Naive thymus-derived CD4-positive, alpha-beta T cell (primary cell): ENCODE measurements at regions of chr19 and their contacts with region 1.

Region 1: GRCh38 chr19:39341719-39342604 is at the start of gene SAMD4B:
- DNase-seq: peak; percentile 97 to 100 (median 99)
- ATAC-seq: peak; percentile 93
- H3K4me3 ChIP-seq: peak within 1 kb of the TSS; percentile 95
- H3K4me3 Mint-ChIP-seq: peak within 1 kb of the TSS; percentile 90 to 100 (median 97)
- H3K27ac ChIP-seq: peak within 1 kb of the TSS; percentile 84
- H3K27ac Mint-ChIP-seq: peak within 1 kb of the TSS; percentile 90 to 97 (median 96)
- H3K4me1 ChIP-seq: peaks cover 23 to 42% of the 10 kb centered on the region in 2 donors
- H3K4me1 Mint-ChIP-seq: peaks cover 64 to 77% (median 73%) of the 10 kb centered on the region in 7 donors
- H3K27me3 ChIP-seq: no peaks in the 10 kb centered on the region
- H3K27me3 Mint-ChIP-seq: no peaks in the 10 kb centered on the region
- total RNA-seq, gene SAMD4B: 52.0 to 84.6 (median 65.6) TPM

Region 2: DNA sequence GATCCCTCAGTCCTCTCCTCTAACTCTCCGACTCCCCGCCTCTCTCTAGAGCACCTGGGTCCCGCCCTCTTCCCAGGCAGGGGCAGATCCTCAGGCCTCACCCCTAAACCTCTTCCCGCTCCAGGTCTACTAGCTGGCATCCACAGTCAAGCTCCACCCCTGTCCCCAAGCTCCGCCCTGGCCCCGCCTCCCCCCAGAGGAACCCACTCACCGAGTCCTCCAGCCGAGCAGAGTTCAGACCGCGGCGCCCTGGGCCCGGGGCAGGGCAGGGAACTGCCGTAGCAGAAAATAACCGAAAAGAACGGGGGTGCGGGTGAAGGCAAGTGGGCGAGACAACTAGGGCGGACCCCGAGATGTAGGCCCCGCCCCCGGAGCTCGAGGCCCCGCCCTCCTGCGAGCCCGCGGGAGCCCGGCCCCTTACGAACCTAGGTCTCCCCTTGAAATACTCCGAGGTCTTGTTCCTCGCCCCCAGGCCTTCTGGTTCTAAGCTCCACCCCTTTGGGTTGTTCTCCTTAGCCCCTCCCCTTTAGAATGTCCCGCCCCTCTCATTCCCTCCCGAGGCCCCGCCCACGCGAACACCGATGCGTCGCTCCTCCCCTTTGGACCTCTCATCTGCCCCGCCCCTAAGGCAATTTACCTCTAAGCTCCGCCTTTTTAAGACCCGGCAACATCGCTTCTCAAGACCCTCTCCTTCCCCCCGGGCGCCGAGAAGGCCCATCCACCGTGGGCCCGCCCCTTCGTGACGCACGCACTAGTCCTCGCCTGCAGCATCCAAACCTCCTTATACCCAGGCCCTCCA is 954.2 kb before region 1 on chr19 and contains the start of gene GGN:
- CTCF ChIA-PET with region 1: no interaction called
- POLR2A ChIA-PET with region 1: no interaction called
- intact Hi-C with region 1: loop called in 1 of 2 experiments (anchors 10 kb)
- DNase-seq: peak; percentile 60 to 83 (median 72)
- ATAC-seq: peak; percentile 83
- H3K4me3 ChIP-seq: peak within 1 kb of the TSS; percentile 74
- H3K4me3 Mint-ChIP-seq: peak within 1 kb of the TSS; percentile 81 to 95 (median 91)
- H3K27ac ChIP-seq: no peak within 1 kb of the TSS
- H3K27ac Mint-ChIP-seq: peak within 1 kb of the TSS in 8 of 9 donors; percentile 43 to 95 (median 84)
- H3K4me1 ChIP-seq: peaks cover 13 to 34% of the 10 kb centered on the region in 2 donors
- H3K4me1 Mint-ChIP-seq: peaks cover 5 to 26% (median 21%) of the 10 kb centered on the region in 7 donors
- H3K27me3 ChIP-seq: no peaks in the 10 kb centered on the region
- H3K27me3 Mint-ChIP-seq: peaks cover 6 to 41% (median 30%) of the 10 kb centered on the region in 5 donors
- total RNA-seq, gene GGN: 0.29 to 0.60 (median 0.39) TPM in 3 of 5 experiments, not detected in the others

Region 3: GRCh38 chr19:39070888-39071287 is 271.1 kb before region 1 on chr19:
- CTCF ChIA-PET with region 1: no interaction called
- POLR2A ChIA-PET with region 1: interaction called, 3 read pairs
- intact Hi-C with region 1: loop called in 1 of 2 experiments (anchors 5 kb)
- DNase-seq: no peak
- ATAC-seq: no peak
- H3K4me3 ChIP-seq: no peak overlapping the region
- H3K4me3 Mint-ChIP-seq: no peak overlapping the region
- H3K27ac ChIP-seq: no peak overlapping the region
- H3K27ac Mint-ChIP-seq: peak overlapping the region in 3 of 9 donors; percentile 35 to 72 (median 67)
- H3K4me1 ChIP-seq: peaks cover 19 to 21% of the 10 kb centered on the region in 2 donors
- H3K4me1 Mint-ChIP-seq: peaks cover 7 to 30% (median 15%) of the 10 kb centered on the region in 7 donors
- H3K27me3 ChIP-seq: no peaks in the 10 kb centered on the region
- H3K27me3 Mint-ChIP-seq: no peaks in the 10 kb centered on the region

Region 4: GRCh38 chr19:39390755-39391592 is 49.0 kb after region 1 on chr19 and contains the starts of genes MED29 and PAF1:
- CTCF ChIA-PET with region 1: no interaction called
- POLR2A ChIA-PET with region 1: interaction called, 23 read pairs
- intact Hi-C with region 1: loop called (anchors 1 kb)
- DNase-seq: peak; percentile 76 to 99 (median 99)
- ATAC-seq: peak; percentile 95
- H3K4me3 ChIP-seq: peak within 1 kb of the TSS; percentile 84
- H3K4me3 Mint-ChIP-seq: peak within 1 kb of the TSS; percentile 89 to 99 (median 96)
- H3K27ac ChIP-seq: peak within 1 kb of the TSS; percentile 95
- H3K27ac Mint-ChIP-seq: peak within 1 kb of the TSS; percentile 95 to 100 (median 99)
- H3K4me1 ChIP-seq: peaks cover 16% of the 10 kb centered on the region in 2 donors
- H3K4me1 Mint-ChIP-seq: peaks cover 21 to 54% (median 38%) of the 10 kb centered on the region in 7 donors
- H3K27me3 ChIP-seq: no peaks in the 10 kb centered on the region
- H3K27me3 Mint-ChIP-seq: no peaks in the 10 kb centered on the region
- total RNA-seq, gene MED29: 44.2 to 57.2 (median 49.4) TPM
- total RNA-seq, gene PAF1: 42.8 to 104 (median 55.5) TPM

Region 5: DNA sequence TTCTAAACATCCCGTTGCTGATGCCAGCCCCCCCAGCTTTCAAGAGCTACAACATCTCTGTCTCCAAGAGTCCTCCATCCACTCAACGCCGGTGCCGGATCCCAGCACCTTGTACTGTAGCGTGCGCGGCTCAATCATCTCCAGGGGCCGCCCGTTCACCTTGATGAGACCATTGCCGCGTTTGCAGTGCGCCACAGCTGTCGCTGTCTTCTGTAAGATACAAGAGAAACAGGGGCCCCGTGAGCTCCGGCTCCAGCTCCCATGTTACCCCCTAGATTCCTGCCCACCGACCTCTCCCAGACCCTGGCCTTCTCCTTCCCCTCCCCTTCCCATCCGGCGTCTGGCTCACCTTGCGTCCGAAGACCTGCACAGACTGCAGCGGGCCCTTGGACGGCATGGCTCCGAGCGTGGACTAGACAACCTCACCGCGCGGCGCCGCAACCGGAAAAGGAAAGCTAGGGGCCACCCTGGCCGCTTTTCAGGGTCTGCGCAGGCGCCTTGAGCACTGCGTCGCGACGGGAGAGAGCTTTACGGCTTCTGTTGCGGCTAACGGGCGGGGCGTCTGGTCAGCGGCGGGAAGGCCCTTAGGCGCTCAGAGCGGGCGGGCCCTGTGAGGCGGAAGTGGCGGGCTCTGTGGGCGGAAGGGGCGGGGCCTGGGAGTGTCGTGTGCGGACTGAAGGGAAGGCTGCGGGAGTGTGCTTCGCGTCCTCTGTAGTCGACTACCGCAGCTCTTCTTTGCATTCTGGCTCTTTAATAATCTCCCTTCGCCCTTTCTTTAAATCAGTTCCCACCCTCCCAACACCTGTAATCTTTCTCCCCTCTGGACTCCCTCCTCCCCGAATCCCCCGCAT is 93.8 kb after region 1 on chr19 and contains the start of gene RPS16:
- CTCF ChIA-PET with region 1: interaction called, 3 read pairs
- POLR2A ChIA-PET with region 1: interaction called, 9 read pairs
- intact Hi-C with region 1: loop called in 1 of 2 experiments (anchors 1 kb)
- DNase-seq: peak; percentile 93 to 100 (median 98)
- ATAC-seq: peak; percentile 98
- H3K4me3 ChIP-seq: peak within 1 kb of the TSS; percentile 98
- H3K4me3 Mint-ChIP-seq: peak within 1 kb of the TSS; percentile 92 to 100 (median 98)
- H3K27ac ChIP-seq: peak within 1 kb of the TSS; percentile 97
- H3K27ac Mint-ChIP-seq: peak within 1 kb of the TSS; percentile 95 to 100 (median 99)
- H3K4me1 ChIP-seq: peaks cover 27% of the 10 kb centered on the region in 2 donors
- H3K4me1 Mint-ChIP-seq: peaks cover 20 to 53% (median 40%) of the 10 kb centered on the region in 7 donors
- H3K27me3 ChIP-seq: no peaks in the 10 kb centered on the region
- H3K27me3 Mint-ChIP-seq: peaks cover 0 to 5% (median 0%) of the 10 kb centered on the region in 5 donors
- total RNA-seq, gene RPS16: 2,281 to 4,335 (median 4,063) TPM

Region 6: DNA sequence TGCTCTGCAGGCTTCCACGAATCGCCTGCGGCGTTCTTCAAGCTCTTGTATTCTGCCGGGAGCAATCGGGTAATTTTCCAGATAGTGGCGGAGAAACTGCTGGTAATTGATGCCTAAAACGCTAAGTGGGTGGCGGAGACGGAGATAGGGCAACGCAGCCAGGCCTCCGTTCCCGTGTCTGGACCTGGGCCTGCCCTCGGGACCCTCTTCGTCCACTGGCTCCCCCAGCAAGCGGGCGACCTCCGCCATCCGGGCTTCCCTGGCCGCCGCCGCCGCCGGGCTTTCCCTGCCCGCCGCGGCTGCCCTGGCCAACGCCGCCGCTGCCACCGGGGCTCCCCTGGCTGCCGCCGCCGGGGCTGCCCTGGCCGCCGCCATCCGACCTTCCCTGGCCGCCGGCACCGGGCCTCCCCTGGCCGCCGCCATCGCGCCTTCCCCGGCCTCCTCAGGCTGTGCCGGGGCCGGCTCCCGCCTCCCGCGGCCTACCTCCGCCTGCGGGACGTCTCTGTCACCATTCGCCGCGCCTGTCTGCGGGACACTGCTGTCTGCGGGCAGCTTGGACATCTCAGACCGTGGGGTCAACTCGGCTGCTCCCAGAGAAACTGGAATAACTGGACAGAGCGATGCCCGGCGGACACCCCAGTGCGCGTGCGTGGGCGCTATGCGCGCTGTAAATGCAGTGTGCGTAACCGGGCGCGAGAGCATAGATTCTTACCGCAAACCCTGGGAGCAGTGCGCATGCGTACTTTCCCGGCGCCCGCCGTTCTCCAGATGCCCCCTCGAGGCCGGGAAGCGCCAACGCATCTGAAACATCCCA is 197.8 kb after region 1 on chr19 and contains the start of gene EID2:
- CTCF ChIA-PET with region 1: no interaction called
- POLR2A ChIA-PET with region 1: no interaction called
- intact Hi-C with region 1: loop called in 1 of 2 experiments (anchors 1 kb)
- DNase-seq: peak; percentile 90 to 95 (median 91)
- ATAC-seq: peak; percentile 96
- H3K4me3 ChIP-seq: peak within 1 kb of the TSS; percentile 94
- H3K4me3 Mint-ChIP-seq: peak within 1 kb of the TSS; percentile 95 to 98 (median 97)
- H3K27ac ChIP-seq: peak within 1 kb of the TSS; percentile 98
- H3K27ac Mint-ChIP-seq: peak within 1 kb of the TSS; percentile 94 to 99 (median 98)
- H3K4me1 ChIP-seq: peaks cover 16 to 21% of the 10 kb centered on the region in 2 donors
- H3K4me1 Mint-ChIP-seq: peaks cover 45 to 85% (median 68%) of the 10 kb centered on the region in 7 donors
- H3K27me3 ChIP-seq: no peaks in the 10 kb centered on the region
- H3K27me3 Mint-ChIP-seq: peaks cover 0 to 2% (median 0%) of the 10 kb centered on the region in 5 donors
- total RNA-seq, gene EID2: 12.2 to 29.1 (median 16.1) TPM

Region 7: DNA sequence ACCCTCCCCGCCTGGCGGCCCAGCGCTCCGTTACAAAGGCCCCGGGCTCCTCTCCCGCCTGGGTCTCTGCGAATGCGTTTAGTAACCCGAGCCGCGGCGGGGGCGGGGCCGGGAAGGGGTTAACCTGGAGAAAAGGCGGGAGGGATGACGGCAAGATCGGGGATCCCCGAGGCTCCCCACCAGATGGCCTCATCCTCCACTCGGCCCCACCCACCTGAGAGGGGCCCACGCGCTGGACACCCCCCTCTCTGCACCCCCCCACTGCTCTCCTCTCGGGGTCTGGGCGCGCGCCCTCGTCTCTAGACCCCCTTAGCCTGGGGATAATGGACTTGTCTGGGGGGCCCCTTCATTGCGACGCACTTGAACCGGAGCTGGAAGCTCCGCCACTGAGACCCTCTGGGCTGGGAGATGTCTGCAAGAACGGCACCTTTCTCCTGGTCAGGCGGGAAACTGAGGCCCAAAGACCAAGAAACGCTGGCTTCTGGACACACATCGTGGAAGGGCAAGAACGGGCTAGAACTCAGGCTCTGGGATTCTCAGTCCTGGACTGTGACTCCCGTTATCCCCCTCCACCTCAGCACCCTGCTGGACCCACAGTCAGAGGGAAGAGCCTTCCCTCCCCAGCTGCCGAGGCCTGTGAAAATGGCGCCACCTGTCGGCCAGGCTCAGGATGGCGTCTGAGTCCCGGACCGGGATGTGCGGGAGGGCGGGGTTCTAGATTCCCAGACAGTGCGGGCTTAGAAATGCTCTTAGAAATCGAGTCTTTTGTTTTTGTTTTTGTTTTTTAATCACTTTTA is 1256.4 kb after region 1 on chr19:
- CTCF ChIA-PET with region 1: no interaction called
- POLR2A ChIA-PET with region 1: no interaction called
- intact Hi-C with region 1: no loop called
- DNase-seq: peak; percentile 55 to 92 (median 78)
- ATAC-seq: peak; percentile 80
- H3K4me3 ChIP-seq: no peak overlapping the region
- H3K4me3 Mint-ChIP-seq: peak overlapping the region in 8 of 10 donors; percentile 35 to 76 (median 50)
- H3K27ac ChIP-seq: no peak overlapping the region
- H3K27ac Mint-ChIP-seq: peak overlapping the region in 1 of 9 donors; percentile 36
- H3K4me1 ChIP-seq: peaks cover 46 to 47% of the 10 kb centered on the region in 2 donors
- H3K4me1 Mint-ChIP-seq: peaks cover 21 to 60% (median 50%) of the 10 kb centered on the region in 7 donors
- H3K27me3 ChIP-seq: peaks cover 17 to 25% of the 10 kb centered on the region in 2 donors
- H3K27me3 Mint-ChIP-seq: peaks cover 29 to 73% (median 36%) of the 10 kb centered on the region in 5 donors